ENCODE measurements at regions of chr15 and their contacts with region 1.

Region 1: DNA sequence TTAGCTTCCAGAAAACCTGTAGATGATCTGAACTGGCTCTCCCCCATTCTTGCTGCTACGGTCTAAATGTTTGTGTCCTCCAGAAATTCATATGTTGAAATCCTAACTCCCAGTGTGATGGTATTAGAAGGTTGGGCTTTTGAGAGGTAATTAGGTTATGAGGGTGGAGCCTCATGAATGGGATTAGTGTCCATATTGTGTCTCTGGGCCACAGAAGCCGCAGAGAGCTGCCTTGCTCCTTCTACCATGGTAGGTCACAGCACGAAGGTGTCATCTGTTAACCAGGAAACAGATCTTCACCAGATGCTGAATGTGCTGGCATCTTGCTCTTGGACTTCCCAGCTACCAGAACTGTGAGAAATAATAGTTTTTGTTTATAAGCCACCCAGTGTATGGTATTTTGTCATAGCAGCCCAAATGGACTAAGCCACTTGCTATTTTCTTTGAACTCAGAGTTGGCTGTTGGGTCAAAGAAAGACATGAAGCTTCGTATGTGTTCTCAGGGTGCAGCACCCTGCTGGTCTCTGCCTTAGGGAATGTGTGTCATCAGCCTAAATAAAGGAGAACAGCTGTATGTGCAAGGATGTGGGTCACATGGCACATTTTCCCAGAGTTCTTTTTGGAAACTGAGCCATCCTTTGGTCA is 317.5 kb upstream of the SLCO3A1 start:
- DNase-seq: no peak
- H3K4me3 Mint-ChIP-seq: peak overlapping the region; percentile 37
- H3K27ac Mint-ChIP-seq: peak overlapping the region; percentile 91
- H3K4me1 Mint-ChIP-seq: peaks cover 75% of the 10 kb centered on the region
- H3K27me3 Mint-ChIP-seq: no peaks in the 10 kb centered on the region
- CTCF ChIP-seq: no peak

Region 2: DNA sequence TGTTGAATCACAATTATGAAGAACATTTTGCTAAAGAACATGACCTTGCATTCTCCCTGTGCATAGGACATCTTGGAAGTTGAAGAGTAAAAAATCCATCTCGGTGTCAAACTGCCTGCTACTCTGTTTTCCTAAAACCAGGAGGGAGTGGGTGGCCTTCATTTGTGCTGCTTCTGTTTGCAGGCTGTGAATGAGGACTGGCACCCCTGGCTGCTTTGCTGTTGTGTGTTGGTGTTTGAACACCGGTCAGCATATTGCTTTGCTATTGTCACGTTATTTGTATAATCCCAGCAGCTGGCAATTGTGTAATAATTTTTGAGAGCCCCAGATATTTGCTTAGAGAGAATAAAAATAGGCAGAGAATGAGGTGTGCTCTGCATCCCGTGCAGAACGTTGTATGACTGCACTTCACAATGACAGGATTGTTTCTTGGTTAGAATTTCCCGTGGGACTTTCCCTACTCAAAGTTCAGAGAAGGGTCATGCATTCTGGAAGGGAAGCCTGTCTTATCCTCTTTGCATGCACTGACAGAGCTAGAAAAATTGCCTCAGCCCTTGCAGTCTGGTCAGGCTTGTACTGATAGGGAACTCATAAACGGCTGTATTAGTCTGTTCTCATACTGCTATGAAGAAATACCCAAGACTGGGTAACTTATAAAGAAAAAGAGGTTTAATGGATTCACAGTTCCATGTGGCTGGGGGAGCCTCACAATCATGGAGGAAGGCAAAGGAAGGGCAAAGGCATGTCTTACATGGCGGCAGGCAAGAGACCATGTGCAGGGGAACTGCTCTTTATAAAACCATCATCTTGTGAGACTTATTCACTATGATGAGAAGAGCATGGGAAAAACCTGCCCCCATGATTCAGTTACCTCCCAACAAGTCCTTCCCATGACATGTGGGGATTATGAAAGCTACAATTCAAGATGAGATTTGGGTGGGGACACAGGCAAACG is 419.6 kb before region 1 on chr15:
- CTCF ChIA-PET with region 1: no interaction called
- intact Hi-C with region 1: loop called (anchors 5 kb)
- DNase-seq: peak; percentile 83
- H3K4me3 Mint-ChIP-seq: peak overlapping the region; percentile 14
- H3K27ac Mint-ChIP-seq: peak overlapping the region; percentile 93
- H3K4me1 Mint-ChIP-seq: peaks cover 22% of the 10 kb centered on the region
- H3K27me3 Mint-ChIP-seq: no peaks in the 10 kb centered on the region
- CTCF ChIP-seq: no peak

Region 3: GRCh38 chr15:91253605-91254004 is 282.4 kb before region 1 on chr15:
- CTCF ChIA-PET with region 1: no interaction called
- intact Hi-C with region 1: no loop called
- DNase-seq: no peak
- H3K4me3 Mint-ChIP-seq: no peak overlapping the region
- H3K27ac Mint-ChIP-seq: no peak overlapping the region
- H3K4me1 Mint-ChIP-seq: no peaks in the 10 kb centered on the region
- H3K27me3 Mint-ChIP-seq: peaks cover 91% of the 10 kb centered on the region
- CTCF ChIP-seq: no peak

Region 4: GRCh38 chr15:91456251-91456738 is 79.7 kb before region 1 on chr15:
- CTCF ChIA-PET with region 1: no interaction called
- intact Hi-C with region 1: loop called (anchors 1 kb)
- DNase-seq: peak; percentile 88
- H3K4me3 Mint-ChIP-seq: peak overlapping the region; percentile 59
- H3K27ac Mint-ChIP-seq: peak overlapping the region; percentile 92
- H3K4me1 Mint-ChIP-seq: peaks cover 44% of the 10 kb centered on the region
- H3K27me3 Mint-ChIP-seq: no peaks in the 10 kb centered on the region
- CTCF ChIP-seq: no peak

Region 5: DNA sequence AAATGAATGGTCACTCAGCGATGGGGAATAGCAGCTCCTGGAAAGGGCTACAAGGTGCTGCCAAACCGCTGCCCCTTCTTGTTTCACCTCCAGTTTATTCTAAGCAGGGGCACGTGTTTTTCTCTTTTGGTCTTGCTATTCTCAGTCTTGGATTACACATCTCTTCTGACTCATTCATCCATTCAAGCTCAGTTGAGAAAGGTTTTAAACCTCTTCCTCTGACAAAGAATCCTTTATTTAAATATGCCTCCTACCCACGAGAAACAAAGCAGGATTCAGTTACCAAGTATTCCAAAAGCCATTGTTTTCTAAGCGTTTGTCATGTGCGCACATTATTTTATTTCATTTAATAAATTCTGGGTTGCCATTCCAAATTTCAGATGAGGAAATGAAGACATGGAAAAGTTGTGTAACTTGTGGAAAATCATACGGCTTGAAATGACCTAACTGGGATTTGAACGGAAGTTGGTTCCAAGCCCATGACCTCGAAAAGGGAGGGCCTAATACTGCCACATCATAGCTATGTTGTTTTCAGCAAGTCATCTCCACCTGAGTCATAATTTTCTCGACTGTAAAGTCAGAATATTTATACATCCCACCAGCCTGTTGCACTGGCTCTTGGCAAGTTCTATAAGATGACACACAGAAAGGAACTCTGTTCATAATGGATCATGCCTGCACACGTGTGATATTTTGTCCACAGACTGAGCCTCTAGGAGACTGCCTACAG is 25.6 kb after region 1 on chr15:
- CTCF ChIA-PET with region 1: interaction called, 21 read pairs
- intact Hi-C with region 1: loop called (anchors 1 kb)
- DNase-seq: peak; percentile 51
- H3K4me3 Mint-ChIP-seq: peak overlapping the region; percentile 59
- H3K27ac Mint-ChIP-seq: peak overlapping the region; percentile 98
- H3K4me1 Mint-ChIP-seq: peaks cover 33% of the 10 kb centered on the region
- H3K27me3 Mint-ChIP-seq: no peaks in the 10 kb centered on the region
- CTCF ChIP-seq: no peak

Region 6: DNA sequence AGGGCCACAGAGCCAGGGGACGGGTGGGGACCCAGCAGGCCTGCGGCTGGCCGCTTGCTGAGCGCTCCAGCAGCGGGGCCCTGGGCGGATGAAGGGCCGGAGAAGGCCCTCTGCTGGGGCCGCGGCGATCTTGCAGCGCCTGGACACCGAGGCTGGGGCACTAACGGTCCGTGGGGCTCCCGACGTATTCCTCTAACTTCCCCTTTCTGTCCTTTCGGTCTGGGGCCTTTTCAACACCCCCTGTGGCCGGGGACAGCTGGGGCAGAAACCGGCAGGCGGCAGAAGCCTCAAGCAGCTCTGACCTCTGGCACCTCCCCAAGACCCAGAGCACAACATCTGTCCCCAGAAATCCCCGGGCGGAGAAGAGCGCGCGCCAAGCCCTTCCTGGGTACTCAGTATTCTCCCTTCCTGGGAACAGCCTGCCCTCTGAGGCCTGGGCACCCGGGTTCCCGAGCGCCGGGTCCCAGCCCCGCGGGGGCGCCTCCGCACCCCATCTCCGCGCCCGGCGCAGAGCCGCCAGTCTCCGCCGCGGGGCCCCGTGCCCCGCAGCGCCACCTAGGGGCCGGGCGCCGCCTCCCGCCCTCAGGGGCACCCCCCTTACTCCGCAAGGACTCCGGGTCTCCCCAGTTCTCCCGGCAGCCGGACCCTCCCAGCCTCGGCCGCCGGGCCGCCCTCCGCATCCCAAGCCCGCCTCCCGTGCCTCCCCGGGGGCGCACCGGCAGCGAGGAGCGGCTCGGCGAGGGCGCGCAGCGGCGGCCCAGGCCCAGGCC is 316.9 kb after region 1 on chr15:
- CTCF ChIA-PET with region 1: interaction called, 4 read pairs
- intact Hi-C with region 1: loop called (anchors 2 kb)
- DNase-seq: peak; percentile 87
- H3K4me3 Mint-ChIP-seq: peak overlapping the region; percentile 84
- H3K27ac Mint-ChIP-seq: peak overlapping the region; percentile 78
- H3K4me1 Mint-ChIP-seq: peaks cover 45% of the 10 kb centered on the region
- H3K27me3 Mint-ChIP-seq: no peaks in the 10 kb centered on the region
- CTCF ChIP-seq: peak; percentile 95

Measured in Calu3 (cell line).